ENCODE measurements at regions of chr18 and their contacts with region 1.

Region 1: DNA sequence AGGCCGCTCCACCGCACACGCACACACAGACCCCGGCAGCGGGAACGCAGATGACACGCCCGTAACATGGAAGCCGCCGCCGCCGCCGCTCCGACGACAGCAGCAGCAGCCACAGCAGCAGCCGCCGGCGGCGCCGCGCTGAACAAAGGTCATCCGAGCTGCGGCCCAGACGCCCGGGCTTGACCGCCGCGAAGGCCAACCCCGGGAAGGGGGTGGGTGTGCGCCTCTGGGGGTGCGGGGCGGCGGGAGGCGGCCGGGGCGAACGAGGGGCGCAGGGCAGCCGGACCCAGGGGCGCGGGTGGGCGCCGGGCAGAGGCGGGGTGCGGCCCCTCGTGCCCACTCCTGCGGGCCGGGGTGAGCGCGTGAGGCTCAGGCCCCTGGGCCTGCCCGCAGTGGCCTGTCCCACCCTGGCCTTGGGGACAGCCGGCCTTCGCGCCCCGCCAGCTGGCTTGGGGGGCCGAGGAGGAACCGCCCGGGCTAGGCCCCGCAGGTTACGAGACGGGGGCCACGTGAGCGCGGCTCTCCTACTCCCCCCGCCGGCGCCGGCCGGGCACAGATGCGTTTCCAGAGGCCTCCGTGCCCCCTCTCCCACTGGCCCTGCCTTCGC is 1.0 kb upstream of the ZNF532 start:
- DNase-seq: no peak
- H3K4me3 ChIP-seq: peak overlapping the region; percentile 35 to 94 (median 50)
- H3K27ac ChIP-seq: peak overlapping the region; percentile 93
- H3K4me1 ChIP-seq: peaks cover 30 to 62% (median 47%) of the 10 kb centered on the region in 4 experiments
- H3K27me3 ChIP-seq: no peaks in the 10 kb centered on the region
- CTCF ChIP-seq: no peak
- EP300 ChIP-seq: no peak
- POLR2A ChIP-seq: 0 out of 3 replicates have a peak, but pooled peaks of 1 of the 2 experiments have one; percentile 43
- RAD21 ChIP-seq: no peak

Region 2: GRCh38 chr18:58781627-58782194 is 81.9 kb before region 1 on chr18:
- CTCF ChIA-PET with region 1: interaction called, 7 read pairs
- POLR2A ChIA-PET with region 1: interaction called, 34 read pairs
- DNase-seq: peak; percentile 56 to 86
- H3K4me3 ChIP-seq: no peak overlapping the region
- H3K27ac ChIP-seq: no peak overlapping the region
- H3K4me1 ChIP-seq: peaks cover 5 to 17% (median 11%) of the 10 kb centered on the region in 4 experiments
- H3K27me3 ChIP-seq: no peaks in the 10 kb centered on the region
- CTCF ChIP-seq: peak; percentile 75 to 92 (median 86)
- EP300 ChIP-seq: no peak
- POLR2A ChIP-seq: no peak
- RAD21 ChIP-seq: peak; percentile 95 to 98

Region 3: GRCh38 chr18:58813561-58814225 is 49.9 kb before region 1 on chr18:
- CTCF ChIA-PET with region 1: no interaction called
- POLR2A ChIA-PET with region 1: interaction called, 14 read pairs
- DNase-seq: no peak
- H3K4me3 ChIP-seq: no peak overlapping the region
- H3K27ac ChIP-seq: no peak overlapping the region
- H3K4me1 ChIP-seq: peaks cover 2 to 7% (median 5%) of the 10 kb centered on the region in 4 experiments; a peak in 5 of 7 replicates
- H3K27me3 ChIP-seq: no peaks in the 10 kb centered on the region
- CTCF ChIP-seq: no peak
- EP300 ChIP-seq: no peak
- POLR2A ChIP-seq: no peak
- RAD21 ChIP-seq: no peak

Region 4: GRCh38 chr18:58829263-58829662 is 34.4 kb before region 1 on chr18:
- CTCF ChIA-PET with region 1: interaction called, 4 read pairs
- POLR2A ChIA-PET with region 1: interaction called, 10 read pairs
- DNase-seq: no peak
- H3K4me3 ChIP-seq: no peak overlapping the region
- H3K27ac ChIP-seq: no peak overlapping the region
- H3K4me1 ChIP-seq: peaks cover 2 to 4% (median 3%) of the 10 kb centered on the region in 4 experiments; a peak in 5 of 7 replicates
- H3K27me3 ChIP-seq: no peaks in the 10 kb centered on the region
- CTCF ChIP-seq: no peak
- EP300 ChIP-seq: no peak
- POLR2A ChIP-seq: no peak
- RAD21 ChIP-seq: no peak

Region 5: DNA sequence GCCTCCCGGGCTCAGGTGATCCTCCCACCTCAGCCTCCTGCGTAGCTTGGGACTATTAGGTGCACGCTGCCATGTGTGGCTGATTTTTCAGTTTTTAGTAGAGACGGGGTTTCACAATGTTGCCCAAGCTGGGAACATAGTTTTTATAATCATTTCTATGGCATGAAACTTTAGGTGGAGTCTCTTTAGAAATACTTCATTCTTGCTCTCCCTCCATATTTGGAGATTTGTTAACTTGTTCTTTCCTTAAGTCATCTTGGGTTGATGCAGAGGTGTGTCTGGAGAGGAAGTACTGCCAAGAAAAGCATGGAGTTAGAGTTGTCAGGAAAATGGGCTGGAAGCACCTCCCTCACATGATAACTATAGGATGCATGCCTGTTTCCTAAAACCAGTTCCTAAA is 18.4 kb after region 1 on chr18:
- CTCF ChIA-PET with region 1: interaction called, 13 read pairs
- POLR2A ChIA-PET with region 1: interaction called, 622 read pairs
- DNase-seq: no peak
- H3K4me3 ChIP-seq: no peak overlapping the region
- H3K27ac ChIP-seq: no peak overlapping the region
- H3K4me1 ChIP-seq: peaks cover 0 to 8% (median 1%) of the 10 kb centered on the region in 4 experiments; a peak in 2 of 7 replicates
- H3K27me3 ChIP-seq: no peaks in the 10 kb centered on the region
- CTCF ChIP-seq: no peak
- EP300 ChIP-seq: no peak
- POLR2A ChIP-seq: no peak
- RAD21 ChIP-seq: no peak

Region 6: GRCh38 chr18:58896268-58896667 is 32.6 kb after region 1 on chr18:
- CTCF ChIA-PET with region 1: interaction called, 3 read pairs
- POLR2A ChIA-PET with region 1: interaction called, 622 read pairs
- DNase-seq: no peak
- H3K4me3 ChIP-seq: no peak overlapping the region
- H3K27ac ChIP-seq: no peak overlapping the region
- H3K4me1 ChIP-seq: peaks cover 0 to 24% (median 7%) of the 10 kb centered on the region in 4 experiments; a peak in 6 of 7 replicates
- H3K27me3 ChIP-seq: no peaks in the 10 kb centered on the region
- CTCF ChIP-seq: no peak
- EP300 ChIP-seq: no peak
- POLR2A ChIP-seq: no peak
- RAD21 ChIP-seq: no peak

Region 7: GRCh38 chr18:58980991-58981390 is 117.3 kb after region 1 on chr18:
- CTCF ChIA-PET with region 1: no interaction called
- POLR2A ChIA-PET with region 1: no interaction called
- DNase-seq: no peak
- H3K4me3 ChIP-seq: no peak overlapping the region
- H3K27ac ChIP-seq: no peak overlapping the region
- H3K4me1 ChIP-seq: no peaks in the 10 kb centered on the region
- H3K27me3 ChIP-seq: no peaks in the 10 kb centered on the region
- CTCF ChIP-seq: no peak
- EP300 ChIP-seq: no peak
- POLR2A ChIP-seq: no peak
- RAD21 ChIP-seq: no peak